ENCODE measurements at regions of chr1 and their contacts with region 1.

Region 1: GRCh38 chr1:47313915-47314664 is at the start of gene STIL:
- DNase-seq: peak; percentile 85 to 98 (median 93)
- ATAC-seq: peak; percentile 95 to 99 (median 98)
- H3K4me3 ChIP-seq: peak within 1 kb of the TSS; percentile 63 to 87
- H3K4me3 Mint-ChIP-seq: peak within 1 kb of the TSS; percentile 92 to 96 (median 93)
- H3K27ac ChIP-seq: peak within 1 kb of the TSS; percentile 76
- H3K27ac Mint-ChIP-seq: peak within 1 kb of the TSS; percentile 93 to 98
- H3K4me1 ChIP-seq: peaks cover 3 to 14% of the 10 kb centered on the region in 2 experiments
- H3K4me1 Mint-ChIP-seq: peaks cover 15 to 18% (median 16%) of the 10 kb centered on the region in 3 donors
- H3K27me3 ChIP-seq: peaks cover 0 to 2% of the 10 kb centered on the region in 2 experiments
- H3K27me3 Mint-ChIP-seq: no peaks in the 10 kb centered on the region
- total RNA-seq, gene STIL: 0.85 to 3.4 (median 1.7) TPM

Region 2: GRCh38 chr1:47333922-47334764 is 20.1 kb after region 1 on chr1:
- CTCF ChIA-PET with region 1: interaction called in 1 of 2 experiments, 13 read pairs
- POLR2A ChIA-PET with region 1: interaction called in 1 of 2 experiments, 5 read pairs
- DNase-seq: peak; percentile 32 to 85 (median 62)
- ATAC-seq: peak; percentile 90 to 95 (median 92)
- H3K4me3 ChIP-seq: peak overlapping the region; percentile 60 to 88
- H3K4me3 Mint-ChIP-seq: peak overlapping the region in 1 of 3 donors; percentile 89
- H3K27ac ChIP-seq: peak overlapping the region; percentile 86
- H3K27ac Mint-ChIP-seq: peak overlapping the region; percentile 86 to 91
- H3K4me1 ChIP-seq: peaks cover 5 to 27% of the 10 kb centered on the region in 2 experiments
- H3K4me1 Mint-ChIP-seq: peaks cover 24 to 30% (median 29%) of the 10 kb centered on the region in 3 donors
- H3K27me3 ChIP-seq: no peaks in the 10 kb centered on the region
- H3K27me3 Mint-ChIP-seq: no peaks in the 10 kb centered on the region

Region 3: GRCh38 chr1:47745725-47746597 is 431.9 kb after region 1 on chr1:
- CTCF ChIA-PET with region 1: no interaction called
- POLR2A ChIA-PET with region 1: no interaction called
- DNase-seq: no peak
- ATAC-seq: no peak
- H3K4me3 ChIP-seq: no peak overlapping the region
- H3K4me3 Mint-ChIP-seq: no peak overlapping the region
- H3K27ac ChIP-seq: no peak overlapping the region
- H3K27ac Mint-ChIP-seq: no peak overlapping the region
- H3K4me1 ChIP-seq: no peaks in the 10 kb centered on the region
- H3K4me1 Mint-ChIP-seq: no peaks in the 10 kb centered on the region
- H3K27me3 ChIP-seq: peaks cover 0 to 8% of the 10 kb centered on the region in 2 experiments
- H3K27me3 Mint-ChIP-seq: peaks cover 12 to 14% of the 10 kb centered on the region in 2 donors

Measured in T-cell (primary cell).